Naive thymus-derived CD4-positive, alpha-beta T cell (primary cell): ENCODE measurements at regions of chr4 and their contacts with region 1.

Region 1: DNA sequence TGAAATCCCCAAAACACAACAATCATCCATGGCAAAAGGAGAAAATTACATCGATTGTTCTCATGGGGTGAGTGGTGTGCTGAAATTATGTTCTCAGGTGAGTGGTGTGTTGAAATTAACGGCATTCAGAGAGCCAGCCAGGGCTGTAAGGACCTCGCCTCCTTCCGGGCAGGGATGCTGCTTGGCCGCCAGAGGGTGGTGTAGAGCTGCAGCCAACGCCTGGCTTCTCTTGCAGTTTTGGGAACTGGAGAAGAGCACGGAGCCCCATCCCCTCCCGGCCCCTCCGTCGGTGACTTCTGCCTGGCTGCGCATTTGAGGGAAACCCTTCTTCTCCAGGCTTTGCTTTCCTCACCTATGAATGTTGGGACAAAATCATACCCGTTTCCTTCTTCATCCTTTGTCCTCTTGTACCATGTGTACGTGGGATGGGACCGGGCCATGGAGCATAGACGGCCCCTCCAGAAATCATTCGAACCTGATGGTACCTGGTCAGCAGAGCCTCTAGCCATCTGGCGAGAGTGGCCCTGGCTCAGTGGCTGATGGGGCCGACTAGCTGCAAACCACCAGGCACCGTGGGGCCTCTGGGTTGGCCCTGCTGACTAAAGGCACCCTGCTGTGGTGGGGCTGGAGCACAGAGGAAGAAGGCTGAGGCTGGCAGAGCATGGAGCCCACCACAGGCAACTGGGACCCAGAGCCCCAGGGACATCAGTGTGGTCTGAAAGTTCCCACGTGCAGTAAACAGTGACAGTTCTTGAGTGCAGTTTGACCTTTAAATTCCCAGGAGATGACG is 28.4 kb downstream of the TRMT44 start:
- DNase-seq: peak in 7 of 9 donors; percentile 26 to 52 (median 40)
- ATAC-seq: peak; percentile 83
- H3K4me3 ChIP-seq: no peak overlapping the region
- H3K4me3 Mint-ChIP-seq: peak overlapping the region in 1 of 10 donors; percentile 18
- H3K27ac ChIP-seq: no peak overlapping the region
- H3K27ac Mint-ChIP-seq: no peak overlapping the region
- H3K4me1 ChIP-seq: no peaks in the 10 kb centered on the region
- H3K4me1 Mint-ChIP-seq: no peaks in the 10 kb centered on the region
- H3K27me3 ChIP-seq: no peaks in the 10 kb centered on the region
- H3K27me3 Mint-ChIP-seq: no peaks in the 10 kb centered on the region

Region 2: DNA sequence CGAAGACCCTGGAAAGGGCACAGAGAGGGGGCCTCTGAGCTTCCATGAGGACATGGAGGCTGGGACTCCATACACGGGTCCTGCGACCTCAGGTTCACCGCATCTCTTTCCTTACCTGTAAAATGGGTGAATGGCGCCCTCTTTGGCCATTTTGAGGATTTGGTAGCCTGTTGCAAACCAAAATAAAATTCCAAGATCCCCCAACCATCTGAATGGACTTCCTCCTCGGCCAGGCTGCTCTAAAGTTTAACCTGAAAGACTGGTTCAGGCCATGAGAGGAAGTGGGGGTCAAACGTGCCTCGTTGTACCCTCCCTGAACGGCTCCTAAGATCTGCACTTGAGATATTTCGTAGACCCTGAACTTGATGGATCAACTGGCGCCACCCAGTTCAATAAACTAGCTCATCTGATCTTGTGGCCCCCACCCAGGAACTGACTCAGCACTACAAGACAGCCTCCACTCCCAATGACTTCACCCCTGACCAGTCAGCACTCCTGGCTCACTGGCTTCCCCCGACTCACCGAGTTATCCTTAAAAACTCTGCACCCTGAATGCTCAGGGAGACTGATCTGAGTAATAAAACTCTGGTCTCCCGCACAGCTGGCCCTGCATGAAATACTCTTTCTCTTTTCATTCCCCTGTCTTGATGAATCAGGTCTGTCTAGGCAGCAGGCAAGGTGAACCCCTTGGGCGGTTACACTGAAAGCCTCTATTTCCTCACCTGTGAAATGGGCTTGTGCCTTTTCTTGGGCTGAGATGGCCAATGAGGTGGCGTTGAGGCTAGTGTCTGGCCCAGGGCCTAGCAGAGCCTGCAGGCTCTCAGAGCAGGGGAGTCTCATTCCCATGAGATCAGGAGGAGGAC is 78.4 kb after region 1 on chr4:
- CTCF ChIA-PET with region 1: no interaction called
- POLR2A ChIA-PET with region 1: no interaction called
- intact Hi-C with region 1: loop called in 1 of 2 experiments (anchors 1 kb)
- DNase-seq: no peak
- ATAC-seq: no peak
- H3K4me3 ChIP-seq: no peak overlapping the region
- H3K4me3 Mint-ChIP-seq: no peak overlapping the region
- H3K27ac ChIP-seq: no peak overlapping the region
- H3K27ac Mint-ChIP-seq: no peak overlapping the region
- H3K4me1 ChIP-seq: no peaks in the 10 kb centered on the region
- H3K4me1 Mint-ChIP-seq: peaks cover 0 to 2% (median 0%) of the 10 kb centered on the region in 7 donors
- H3K27me3 ChIP-seq: no peaks in the 10 kb centered on the region
- H3K27me3 Mint-ChIP-seq: peaks cover 0 to 7% (median 0%) of the 10 kb centered on the region in 5 donors

Region 3: DNA sequence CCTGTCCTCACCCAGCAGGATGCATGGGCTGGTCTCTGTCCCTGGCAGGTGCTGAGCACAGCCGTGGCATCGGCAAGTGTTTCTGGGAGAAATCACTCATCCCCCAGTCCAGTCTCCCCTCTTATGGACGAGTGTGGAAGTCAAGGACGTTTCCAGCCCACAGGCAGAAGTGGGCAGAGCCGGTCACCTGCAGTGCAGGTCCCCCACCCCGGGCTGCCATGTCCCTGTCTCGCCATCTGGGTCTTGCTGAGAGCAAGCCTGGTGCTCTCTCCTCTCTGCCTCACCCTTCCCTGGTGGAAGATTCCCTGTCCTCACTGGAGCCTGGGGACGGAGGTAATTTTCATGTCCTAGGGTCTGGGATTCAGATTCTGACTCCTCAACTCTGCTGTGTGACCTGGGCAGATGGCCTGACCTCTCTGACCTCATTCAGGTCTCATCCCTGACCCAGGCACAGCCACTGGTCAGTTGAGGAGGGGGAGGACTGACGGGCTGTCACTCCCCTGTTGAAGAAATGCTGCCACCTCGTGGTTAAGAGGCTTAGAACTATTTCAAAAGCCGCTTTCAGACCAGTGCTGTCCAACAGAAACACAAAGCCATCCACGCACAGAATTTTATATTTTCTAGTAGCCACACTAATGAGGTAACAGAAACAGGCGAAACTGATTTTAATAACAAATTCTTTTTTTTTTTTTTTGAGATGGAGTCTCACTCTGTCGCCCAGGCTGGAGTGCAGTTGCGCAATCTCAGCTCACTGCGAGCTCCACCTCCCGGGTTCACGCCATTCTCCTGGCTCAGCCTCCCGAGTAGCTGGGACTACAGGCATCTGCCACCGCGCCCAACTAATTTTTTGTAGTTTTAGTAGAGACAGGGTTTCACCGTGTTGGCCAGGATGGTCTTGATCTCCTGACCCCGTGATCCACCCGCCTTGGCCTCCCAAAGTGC is 125.4 kb after region 1 on chr4:
- CTCF ChIA-PET with region 1: no interaction called
- POLR2A ChIA-PET with region 1: no interaction called
- intact Hi-C with region 1: loop called in 1 of 2 experiments (anchors 1 kb)
- DNase-seq: no peak
- ATAC-seq: no peak
- H3K4me3 ChIP-seq: no peak overlapping the region
- H3K4me3 Mint-ChIP-seq: no peak overlapping the region
- H3K27ac ChIP-seq: no peak overlapping the region
- H3K27ac Mint-ChIP-seq: no peak overlapping the region
- H3K4me1 ChIP-seq: no peaks in the 10 kb centered on the region
- H3K4me1 Mint-ChIP-seq: peaks cover 0 to 3% (median 0%) of the 10 kb centered on the region in 7 donors
- H3K27me3 ChIP-seq: peaks cover 0 to 4% of the 10 kb centered on the region in 2 donors
- H3K27me3 Mint-ChIP-seq: peaks cover 12 to 56% (median 26%) of the 10 kb centered on the region in 5 donors

Region 4: DNA sequence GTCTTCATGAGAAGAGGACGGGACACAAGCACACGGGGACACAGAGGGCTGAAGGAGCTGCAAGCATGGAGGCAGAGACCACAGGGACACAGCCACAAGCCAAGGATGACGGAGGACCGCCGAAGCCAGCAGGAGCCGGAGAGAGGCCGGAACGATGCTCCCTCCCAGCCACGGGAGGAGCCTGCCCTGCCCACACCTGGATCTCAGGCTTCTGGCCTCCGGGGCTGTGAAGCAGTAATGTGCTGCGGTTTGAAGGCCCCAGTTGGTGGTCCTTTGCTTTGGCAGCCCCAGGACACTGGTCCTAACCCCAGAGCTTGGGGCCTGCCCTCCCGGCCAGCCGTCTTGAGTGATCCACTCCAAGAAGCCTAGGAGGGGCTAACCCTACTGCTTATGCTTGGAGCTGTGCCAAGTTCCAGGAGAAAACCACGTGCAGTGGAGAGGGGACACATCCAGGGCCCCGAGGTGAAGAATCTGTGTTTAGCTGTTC is 316.8 kb after region 1 on chr4:
- CTCF ChIA-PET with region 1: no interaction called
- POLR2A ChIA-PET with region 1: no interaction called
- intact Hi-C with region 1: no loop called
- DNase-seq: no peak
- ATAC-seq: no peak
- H3K4me3 ChIP-seq: no peak overlapping the region
- H3K4me3 Mint-ChIP-seq: no peak overlapping the region
- H3K27ac ChIP-seq: no peak overlapping the region
- H3K27ac Mint-ChIP-seq: no peak overlapping the region
- H3K4me1 ChIP-seq: no peaks in the 10 kb centered on the region
- H3K4me1 Mint-ChIP-seq: no peaks in the 10 kb centered on the region
- H3K27me3 ChIP-seq: no peaks in the 10 kb centered on the region
- H3K27me3 Mint-ChIP-seq: peaks cover 0 to 4% (median 0%) of the 10 kb centered on the region in 5 donors

Region 5: DNA sequence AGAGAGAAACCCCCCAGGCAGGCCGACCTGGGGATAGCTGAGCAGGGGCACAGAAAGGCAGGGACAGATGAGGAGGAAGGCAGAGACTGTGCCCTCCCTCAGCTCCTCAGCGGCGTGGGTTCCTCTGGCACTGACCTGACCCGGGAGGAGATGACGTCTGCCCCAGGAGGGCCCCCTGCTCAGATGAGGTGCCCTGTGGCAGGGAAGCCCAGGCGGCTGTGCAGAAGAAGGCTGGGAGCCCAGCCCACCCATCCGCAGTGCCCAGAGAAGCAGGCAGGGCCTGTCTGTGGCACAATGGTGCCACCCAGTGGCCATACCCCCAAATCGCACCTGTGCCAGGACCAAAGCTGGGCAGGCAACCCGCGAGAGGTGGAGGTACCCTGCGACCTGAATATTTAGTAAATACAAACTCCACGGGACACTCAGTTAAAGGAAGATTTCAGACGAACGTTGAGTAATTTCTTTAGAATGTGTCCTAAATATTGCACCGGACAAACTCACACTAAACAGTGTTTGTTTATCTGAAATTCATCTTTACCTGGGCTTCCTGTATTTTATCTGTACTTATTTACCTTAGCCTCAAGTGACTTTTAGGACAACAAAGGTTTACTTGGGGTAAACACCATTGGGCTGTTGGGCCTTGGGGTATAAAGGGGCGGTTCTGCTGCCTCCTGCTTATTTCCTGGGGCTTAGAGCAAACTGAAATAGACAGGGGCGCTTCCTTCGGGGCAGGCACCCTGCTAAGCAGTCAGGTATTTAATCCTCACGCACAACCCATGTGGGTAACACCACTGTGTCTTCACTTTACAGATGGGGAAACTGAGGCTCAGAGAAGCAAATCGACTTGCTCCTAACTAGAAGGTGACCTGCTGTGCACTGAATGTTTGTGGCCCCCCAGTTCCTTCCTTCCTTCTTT is 449.2 kb after region 1 on chr4:
- CTCF ChIA-PET with region 1: no interaction called
- POLR2A ChIA-PET with region 1: no interaction called
- intact Hi-C with region 1: loop called in 1 of 2 experiments (anchors 5 kb)
- DNase-seq: peak; percentile 6 to 69 (median 38)
- ATAC-seq: peak; percentile 60
- H3K4me3 ChIP-seq: no peak overlapping the region
- H3K4me3 Mint-ChIP-seq: no peak overlapping the region
- H3K27ac ChIP-seq: no peak overlapping the region
- H3K27ac Mint-ChIP-seq: no peak overlapping the region
- H3K4me1 ChIP-seq: no peaks in the 10 kb centered on the region
- H3K4me1 Mint-ChIP-seq: peaks cover 0 to 10% (median 6%) of the 10 kb centered on the region in 7 donors
- H3K27me3 ChIP-seq: no peaks in the 10 kb centered on the region
- H3K27me3 Mint-ChIP-seq: peaks cover 0 to 28% (median 22%) of the 10 kb centered on the region in 5 donors